B cell (primary cell): ENCODE measurements at regions of chr10 and their contacts with region 1.

Region 1: DNA sequence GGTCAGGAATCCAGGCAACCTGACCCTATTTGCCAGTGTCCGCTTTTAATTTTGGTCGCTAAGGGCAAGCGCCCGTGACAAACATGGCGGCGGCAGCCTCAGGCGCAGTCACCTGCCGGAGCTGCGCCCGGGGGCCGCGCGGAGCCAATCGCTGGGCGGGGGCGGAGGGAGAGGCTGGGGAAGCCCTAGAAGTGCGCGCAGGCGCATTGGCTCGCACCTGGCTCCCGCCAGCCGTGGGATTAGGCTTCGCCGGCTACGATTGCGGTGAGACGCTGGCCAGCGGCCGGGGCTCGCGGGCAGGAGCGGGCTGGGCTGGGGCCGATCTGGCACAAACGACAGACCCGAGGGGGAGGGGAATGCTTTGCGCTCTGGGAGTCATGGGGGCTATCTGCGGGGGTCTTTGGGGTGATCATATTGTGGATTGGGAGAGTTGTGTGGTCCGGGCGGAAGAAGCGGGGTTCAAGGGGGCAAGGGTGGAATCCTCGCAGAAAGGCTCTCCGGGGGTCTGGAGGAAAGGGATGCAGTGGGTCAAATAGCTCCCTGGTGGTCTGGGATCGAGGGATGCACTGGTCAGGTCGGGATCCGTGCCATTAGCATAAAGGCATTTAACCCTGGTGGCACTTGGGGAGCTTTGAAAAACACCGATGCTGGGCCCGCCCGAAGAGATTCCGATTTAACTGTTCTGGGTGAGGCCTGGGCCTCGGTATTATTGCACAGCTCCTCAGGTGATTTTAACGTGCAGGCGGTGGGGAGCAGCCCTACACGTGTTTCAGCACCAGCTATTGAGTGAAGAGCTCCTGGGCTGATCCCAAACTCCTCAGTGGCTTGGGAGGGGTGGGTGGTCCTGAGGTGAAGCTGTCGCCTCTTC is 10.1 kb upstream of the C10orf95 start:
- DNase-seq: peak; percentile 95
- ATAC-seq: peak; percentile 99
- H3K4me3 ChIP-seq: peak overlapping the region; percentile 34 to 76 (median 68)
- H3K4me3 Mint-ChIP-seq: peak overlapping the region; percentile 85
- H3K27ac ChIP-seq: peak overlapping the region; percentile 17 to 71
- H3K27ac Mint-ChIP-seq: peak overlapping the region; percentile 76
- H3K4me1 ChIP-seq: peaks cover 17 to 23% of the 10 kb centered on the region in 2 donors
- H3K4me1 Mint-ChIP-seq: peaks cover 29% of the 10 kb centered on the region
- H3K27me3 ChIP-seq: peaks cover 0 to 4% (median 0%) of the 10 kb centered on the region in 4 experiments
- H3K27me3 Mint-ChIP-seq: no peaks in the 10 kb centered on the region
- CTCF ChIP-seq: no peak

Region 2: DNA sequence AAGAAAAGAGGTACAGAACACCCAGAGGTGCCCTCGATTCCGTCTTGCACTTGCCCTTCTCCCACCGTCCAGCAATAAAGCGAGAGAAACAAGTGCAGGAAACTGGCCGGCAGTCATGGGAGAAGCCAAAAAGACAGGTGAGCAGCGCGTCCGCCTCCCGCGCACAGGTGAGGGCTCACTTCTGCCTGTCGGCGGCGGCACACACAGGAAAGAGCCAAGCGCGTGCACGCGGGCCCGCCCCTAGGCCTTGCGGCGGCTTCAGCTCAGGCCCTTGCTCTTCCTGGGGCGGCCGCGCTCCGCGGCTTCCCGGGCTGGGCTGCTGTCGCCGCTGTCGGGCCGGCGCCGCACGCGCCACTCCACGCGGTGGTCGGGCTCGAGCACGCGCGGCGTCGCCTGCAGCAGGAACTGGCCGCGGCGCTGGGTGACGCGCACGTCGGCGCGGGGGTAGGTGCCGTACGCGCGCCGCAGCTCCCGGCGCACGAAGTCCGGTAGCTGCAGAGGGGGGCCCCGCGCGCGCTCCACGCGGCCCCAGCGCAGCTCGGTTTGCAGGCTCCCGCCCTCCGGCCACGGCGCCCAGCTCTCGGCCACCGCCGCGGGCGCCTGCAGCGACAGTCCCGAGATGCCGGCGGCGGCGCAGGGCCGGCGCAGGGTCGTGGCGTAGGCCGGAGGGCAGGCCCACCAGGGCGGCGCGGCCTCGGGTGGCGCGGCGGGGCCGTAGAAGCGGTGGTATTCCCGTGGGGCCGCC is 11.1 kb before region 1 on chr10:
- CTCF ChIA-PET with region 1: interaction called, 30 read pairs
- POLR2A ChIA-PET with region 1: interaction called, 25 read pairs
- intact Hi-C with region 1: loop called (anchors 1 kb)
- DNase-seq: peak; percentile 96
- ATAC-seq: peak; percentile 79
- H3K4me3 ChIP-seq: peak overlapping the region; percentile 75 to 97 (median 87)
- H3K4me3 Mint-ChIP-seq: peak overlapping the region; percentile 97
- H3K27ac ChIP-seq: peak overlapping the region; percentile 81 to 86
- H3K27ac Mint-ChIP-seq: peak overlapping the region; percentile 97
- H3K4me1 ChIP-seq: peaks cover 12 to 15% of the 10 kb centered on the region in 2 donors
- H3K4me1 Mint-ChIP-seq: peaks cover 19% of the 10 kb centered on the region
- H3K27me3 ChIP-seq: no peaks in the 10 kb centered on the region
- H3K27me3 Mint-ChIP-seq: no peaks in the 10 kb centered on the region
- CTCF ChIP-seq: no peak

Region 3: GRCh38 chr10:102485093-102485784 is 23.8 kb after region 1 on chr10:
- CTCF ChIA-PET with region 1: no interaction called
- POLR2A ChIA-PET with region 1: no interaction called
- intact Hi-C with region 1: no loop called
- DNase-seq: no peak
- ATAC-seq: no peak
- H3K4me3 ChIP-seq: no peak overlapping the region
- H3K4me3 Mint-ChIP-seq: no peak overlapping the region
- H3K27ac ChIP-seq: no peak overlapping the region
- H3K27ac Mint-ChIP-seq: no peak overlapping the region
- H3K4me1 ChIP-seq: no peaks in the 10 kb centered on the region
- H3K4me1 Mint-ChIP-seq: no peaks in the 10 kb centered on the region
- H3K27me3 ChIP-seq: no peaks in the 10 kb centered on the region
- H3K27me3 Mint-ChIP-seq: no peaks in the 10 kb centered on the region
- CTCF ChIP-seq: no peak

Region 4: DNA sequence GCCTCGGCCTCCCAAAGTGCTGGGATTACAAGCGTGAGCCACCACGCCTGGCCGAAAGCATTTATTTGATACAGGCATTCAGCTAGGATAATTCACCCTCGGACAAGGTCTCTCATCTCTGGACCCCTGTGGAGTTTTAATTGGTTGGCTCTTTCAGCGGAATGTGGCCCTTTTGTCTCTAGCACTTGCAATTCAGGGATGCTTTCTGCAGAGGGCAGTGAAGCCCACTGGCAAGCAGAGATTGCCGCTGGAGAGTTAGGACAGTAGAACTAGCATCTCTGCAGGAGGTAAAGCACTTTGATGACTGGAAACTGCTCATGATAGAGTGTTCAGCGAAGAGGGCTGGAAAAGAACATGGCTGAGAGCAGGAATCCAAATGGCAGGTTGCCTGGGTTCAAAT is 104.4 kb after region 1 on chr10:
- CTCF ChIA-PET with region 1: no interaction called
- POLR2A ChIA-PET with region 1: no interaction called
- intact Hi-C with region 1: no loop called
- DNase-seq: no peak
- ATAC-seq: no peak
- H3K4me3 ChIP-seq: no peak overlapping the region
- H3K4me3 Mint-ChIP-seq: no peak overlapping the region
- H3K27ac ChIP-seq: no peak overlapping the region
- H3K27ac Mint-ChIP-seq: no peak overlapping the region
- H3K4me1 ChIP-seq: no peaks in the 10 kb centered on the region
- H3K4me1 Mint-ChIP-seq: peaks cover 2% of the 10 kb centered on the region
- H3K27me3 ChIP-seq: no peaks in the 10 kb centered on the region
- H3K27me3 Mint-ChIP-seq: no peaks in the 10 kb centered on the region
- CTCF ChIP-seq: no peak